H1 (cell line): ENCODE measurements at regions of chr1 and their contacts with region 1.

Region 1: DNA sequence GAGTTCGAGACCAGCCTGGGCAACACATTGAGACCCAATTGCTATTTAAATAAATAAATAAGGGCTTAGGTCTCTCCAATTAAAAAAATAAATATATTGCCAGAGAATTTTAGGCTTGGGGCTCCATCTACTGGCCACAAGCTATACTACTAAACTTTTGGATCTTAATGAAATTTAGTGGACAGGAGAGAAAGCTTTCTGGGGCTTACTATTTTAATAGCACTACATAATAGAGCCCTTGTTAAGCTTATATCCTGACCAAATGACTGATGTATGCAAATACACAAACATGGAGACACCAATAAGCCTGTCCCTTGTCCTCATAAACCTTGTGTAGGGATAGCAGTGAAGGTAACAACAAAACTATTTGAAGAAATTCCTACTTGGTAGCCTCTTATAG is 18.4 kb downstream of the CCT3 start:
- DNase-seq: no peak
- H3K4me3 ChIP-seq: no peak overlapping the region
- H3K27ac ChIP-seq: no peak overlapping the region
- H3K4me1 ChIP-seq: no peaks in the 10 kb centered on the region
- H3K27me3 ChIP-seq: no peaks in the 10 kb centered on the region
- CTCF ChIP-seq: peak in 1 of 3 experiments; percentile 15; a peak in 2 of 4 replicates
- EP300 ChIP-seq: no peak
- POLR2A ChIP-seq: no peak
- RAD21 ChIP-seq: peak in 1 of 2 experiments; percentile 33; a peak in 1 of 4 replicates

Region 2: DNA sequence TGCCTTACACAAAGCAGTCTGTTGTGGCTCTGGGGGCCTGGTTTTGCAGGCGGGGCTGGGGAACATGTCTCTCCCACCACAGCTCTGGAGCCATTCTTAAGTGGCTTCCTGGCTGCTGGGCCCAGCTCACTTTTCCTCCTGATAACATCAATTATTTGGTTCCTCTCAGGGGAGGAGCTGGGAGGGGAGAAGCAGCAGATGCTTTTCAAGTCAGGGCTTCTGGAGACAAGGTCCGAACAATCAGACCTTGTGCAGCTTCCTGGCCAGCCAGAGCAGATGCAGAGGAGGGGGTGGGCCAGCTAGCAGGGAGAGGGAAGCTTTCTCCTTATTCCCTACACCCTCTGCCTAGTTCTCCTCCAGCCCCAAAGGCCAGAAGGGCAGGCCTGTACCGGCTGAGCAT is 68.1 kb before region 1 on chr1:
- CTCF ChIA-PET with region 1: interaction called, 14 read pairs
- POLR2A ChIA-PET with region 1: interaction called, 5 read pairs
- DNase-seq: no peak
- H3K4me3 ChIP-seq: no peak overlapping the region
- H3K27ac ChIP-seq: no peak overlapping the region
- H3K4me1 ChIP-seq: peaks cover 0 to 14% (median 6%) of the 10 kb centered on the region in 4 experiments
- H3K27me3 ChIP-seq: no peaks in the 10 kb centered on the region
- CTCF ChIP-seq: no peak
- EP300 ChIP-seq: no peak
- POLR2A ChIP-seq: no peak
- RAD21 ChIP-seq: no peak

Region 3: DNA sequence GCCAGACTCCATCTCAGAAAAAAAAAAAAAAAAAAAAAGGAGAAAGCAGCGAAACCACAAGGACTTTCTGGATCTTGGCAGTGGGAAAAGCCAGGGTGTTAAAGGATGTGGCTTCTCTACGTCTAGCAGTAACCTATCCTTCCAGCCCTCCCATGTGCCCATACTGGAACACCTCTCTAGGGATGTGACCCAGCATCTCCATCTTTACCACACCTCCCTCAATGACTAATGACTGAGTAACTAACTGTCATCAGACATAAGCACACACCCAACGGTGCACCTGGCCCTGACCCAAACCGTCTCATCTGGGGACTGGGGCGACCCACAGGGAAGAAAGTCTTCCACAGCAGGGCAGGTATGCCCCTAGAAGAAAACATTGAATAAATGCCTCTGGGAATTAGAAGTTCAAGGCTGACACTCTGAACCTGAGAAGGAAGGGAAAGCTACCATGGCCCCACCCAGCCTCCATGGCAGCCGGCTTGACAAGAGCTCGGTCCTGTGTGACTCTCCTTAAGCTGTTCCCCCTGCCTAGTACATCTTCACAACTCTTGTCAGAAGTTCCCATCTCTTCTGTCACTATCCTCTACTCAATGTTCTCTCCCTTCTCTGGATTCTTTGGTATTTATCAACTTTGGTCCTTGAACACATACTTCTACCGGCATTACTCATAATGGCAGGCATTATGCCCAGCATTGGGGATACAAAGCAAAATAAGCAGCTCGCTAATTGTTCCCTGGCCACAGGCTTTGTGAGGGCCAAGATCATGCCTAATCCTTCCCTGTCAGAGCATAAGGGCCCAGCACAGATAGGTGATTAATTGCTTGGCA is 57.0 kb before region 1 on chr1:
- CTCF ChIA-PET with region 1: interaction called, 11 read pairs
- POLR2A ChIA-PET with region 1: interaction called, 7 read pairs
- DNase-seq: no peak
- H3K4me3 ChIP-seq: no peak overlapping the region
- H3K27ac ChIP-seq: no peak overlapping the region
- H3K4me1 ChIP-seq: no peaks in the 10 kb centered on the region
- H3K27me3 ChIP-seq: no peaks in the 10 kb centered on the region
- CTCF ChIP-seq: no peak
- EP300 ChIP-seq: no peak
- POLR2A ChIP-seq: no peak
- RAD21 ChIP-seq: no peak

Region 4: GRCh38 chr1:156270314-156270713 is 49.4 kb before region 1 on chr1:
- CTCF ChIA-PET with region 1: interaction called, 22 read pairs
- POLR2A ChIA-PET with region 1: interaction called, 3 read pairs
- DNase-seq: no peak
- H3K4me3 ChIP-seq: no peak overlapping the region
- H3K27ac ChIP-seq: no peak overlapping the region
- H3K4me1 ChIP-seq: no peaks in the 10 kb centered on the region
- H3K27me3 ChIP-seq: no peaks in the 10 kb centered on the region
- CTCF ChIP-seq: no peak
- EP300 ChIP-seq: no peak
- POLR2A ChIP-seq: no peak
- RAD21 ChIP-seq: no peak

Region 5: GRCh38 chr1:156308078-156308477 is 11.6 kb before region 1 on chr1:
- CTCF ChIA-PET with region 1: interaction called, 30 read pairs
- POLR2A ChIA-PET with region 1: interaction called, 16 read pairs
- DNase-seq: no peak
- H3K4me3 ChIP-seq: no peak overlapping the region
- H3K27ac ChIP-seq: no peak overlapping the region
- H3K4me1 ChIP-seq: no peaks in the 10 kb centered on the region
- H3K27me3 ChIP-seq: no peaks in the 10 kb centered on the region
- CTCF ChIP-seq: no peak
- EP300 ChIP-seq: no peak
- POLR2A ChIP-seq: no peak
- RAD21 ChIP-seq: no peak

Region 6: DNA sequence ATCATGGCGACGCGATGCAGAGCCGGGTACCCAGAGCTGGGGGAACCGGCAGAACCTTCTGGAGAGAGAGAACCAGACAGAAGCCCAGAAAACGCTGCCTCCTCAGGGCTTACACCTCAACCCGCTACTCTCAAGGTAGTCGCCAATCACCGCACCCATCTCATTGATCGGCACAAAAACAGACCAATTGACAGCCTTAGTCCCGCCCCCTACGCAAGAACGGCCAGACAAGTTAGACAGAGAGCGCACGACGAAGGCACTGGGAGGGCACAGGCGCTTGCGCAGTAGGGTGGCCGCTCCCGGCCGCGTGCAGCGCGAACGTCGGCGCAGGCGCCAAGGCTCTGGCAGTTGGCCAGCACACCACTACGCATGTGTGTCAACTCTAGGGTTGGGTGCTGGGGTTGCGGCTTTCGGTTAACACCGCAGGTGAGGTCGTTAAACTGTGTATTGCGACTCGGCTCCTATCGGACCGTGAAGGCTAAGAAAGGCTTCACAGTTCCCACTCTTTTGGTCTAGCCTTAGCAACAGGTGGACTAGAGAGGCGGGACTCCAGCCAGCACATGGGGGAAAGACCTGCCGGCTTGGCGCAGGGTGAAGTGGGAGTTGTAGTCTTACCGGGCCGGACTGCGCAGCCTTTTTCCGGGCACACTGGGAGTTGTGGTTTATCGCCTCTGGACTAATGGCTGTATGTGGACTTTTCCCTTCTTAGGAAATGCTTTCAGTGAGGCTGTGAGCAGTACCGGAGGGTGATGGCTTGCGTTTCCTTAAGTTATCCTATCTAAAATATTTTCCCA is 18.7 kb after region 1 on chr1 and contains the starts of genes CCT3 and TSACC:
- CTCF ChIA-PET with region 1: interaction called, 5 read pairs
- POLR2A ChIA-PET with region 1: interaction called, 14 read pairs
- DNase-seq: peak; percentile 99 to 100
- H3K4me3 ChIP-seq: peak within 1 kb of the TSS; percentile 83 to 100 (median 94)
- H3K27ac ChIP-seq: peak within 1 kb of the TSS; percentile 81
- H3K4me1 ChIP-seq: 0 out of 7 replicates have a peak, but pooled peaks cover 0 to 2% (median 0%) of the 10 kb centered on the region in 4 experiments
- H3K27me3 ChIP-seq: no peaks in the 10 kb centered on the region
- CTCF ChIP-seq: no peak
- EP300 ChIP-seq: no peak
- POLR2A ChIP-seq: peak; percentile 54 to 91
- RAD21 ChIP-seq: no peak
- total RNA-seq, gene CCT3: 471 and 480 TPM in 2 replicates
- total RNA-seq, gene TSACC: 1.0 and 2.1 TPM in 2 replicates